ENCODE measurements at regions of chr12 and their contacts with region 1.

Region 1: DNA sequence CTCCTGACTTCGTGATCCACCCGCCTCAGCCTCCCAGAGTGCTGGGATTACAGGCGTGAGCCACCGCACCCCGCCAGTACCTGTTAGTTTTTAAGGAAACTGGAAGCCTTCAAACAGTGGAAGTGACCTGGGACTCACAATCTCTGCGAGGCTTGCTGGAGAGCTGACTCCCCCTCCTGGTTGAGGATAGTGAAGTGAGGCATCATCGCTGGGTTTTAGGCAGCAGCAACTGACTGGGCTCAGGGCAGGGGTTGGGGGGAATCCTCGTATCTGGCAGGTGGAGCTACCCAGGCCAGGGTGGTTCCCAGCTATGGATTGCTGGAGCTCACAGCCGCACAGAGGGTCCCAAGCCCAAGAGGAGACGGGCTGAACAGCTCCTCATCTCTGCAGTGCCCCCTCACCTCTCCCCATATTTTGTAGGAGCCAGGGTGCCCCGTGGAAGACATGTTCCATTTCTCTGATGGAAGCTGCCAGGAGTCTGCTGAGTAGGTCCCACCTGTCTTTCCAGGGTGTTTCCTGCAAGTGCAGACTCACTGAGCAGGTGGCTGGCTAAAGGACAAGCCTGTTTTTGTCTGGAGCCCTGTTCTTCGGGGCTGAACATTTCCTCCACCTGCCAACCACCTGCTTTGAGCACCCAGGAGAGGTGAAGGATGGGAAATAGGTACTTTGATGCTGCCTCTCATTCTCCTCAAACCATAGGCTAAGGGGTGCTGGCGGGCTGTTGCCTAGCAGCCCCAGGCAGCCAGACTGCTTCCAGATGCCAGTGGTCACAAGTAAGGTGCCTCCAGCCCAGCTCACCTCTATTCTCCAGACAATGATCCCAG is 3.1 kb downstream of the AVIL start:
- DNase-seq: no peak
- ATAC-seq: no peak
- H3K4me3 Mint-ChIP-seq: no peak overlapping the region
- H3K27ac Mint-ChIP-seq: peak overlapping the region; percentile 20
- H3K4me1 Mint-ChIP-seq: no peaks in the 10 kb centered on the region
- H3K27me3 Mint-ChIP-seq: no peaks in the 10 kb centered on the region

Region 2: DNA sequence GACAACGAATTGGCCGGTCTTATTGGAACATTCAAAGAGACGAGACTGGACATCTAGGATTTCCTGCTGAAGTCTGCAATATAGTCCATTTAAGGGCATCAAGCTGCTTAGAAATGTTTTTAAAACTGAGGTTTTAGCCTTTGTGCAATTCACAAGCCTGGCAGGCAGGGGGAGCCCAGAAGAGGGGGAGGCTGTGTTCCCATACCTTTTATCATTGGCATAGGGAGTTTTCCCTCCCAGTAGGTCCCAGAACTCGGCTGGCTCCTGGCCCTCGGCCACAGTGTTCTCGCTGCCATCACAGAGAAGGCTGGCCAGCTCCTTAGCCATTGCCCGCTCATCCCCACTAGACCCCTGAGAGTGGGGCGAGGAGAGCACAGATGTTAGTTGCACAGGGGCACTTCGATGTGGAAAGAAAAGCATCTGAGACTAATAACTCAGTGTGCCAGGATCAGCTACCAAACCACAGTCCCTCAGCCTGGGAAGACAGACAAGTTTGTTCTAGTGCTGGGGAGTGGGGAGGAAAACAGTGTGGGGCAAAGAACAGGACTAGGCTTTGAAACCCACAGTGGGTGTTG is 12.0 kb before region 1 on chr12:
- CTCF ChIA-PET with region 1: interaction called, 38 read pairs
- POLR2A ChIA-PET with region 1: no interaction called
- DNase-seq: peak; percentile 49
- ATAC-seq: no peak
- H3K4me3 Mint-ChIP-seq: no peak overlapping the region
- H3K27ac Mint-ChIP-seq: no peak overlapping the region
- H3K4me1 Mint-ChIP-seq: no peaks in the 10 kb centered on the region
- H3K27me3 Mint-ChIP-seq: no peaks in the 10 kb centered on the region

Measured in activated CD8-positive, alpha-beta T cell treated with anti-CD3 and anti-CD28 coated beads, Interleukin-2, amount 10 ng/mL, durations not matched to agents 7 days and 5 days (primary cell).